ENCODE measurements at regions of chr2 and their contacts with region 1.

Region 1: GRCh38 chr2:7845332-7845731 is 836.5 kb upstream of the ID2 start:
- DNase-seq: no peak
- H3K4me3 Mint-ChIP-seq: no peak overlapping the region
- H3K27ac Mint-ChIP-seq: peak overlapping the region; percentile 81
- H3K4me1 Mint-ChIP-seq: peaks cover 64% of the 10 kb centered on the region
- H3K27me3 Mint-ChIP-seq: no peaks in the 10 kb centered on the region

Region 2: GRCh38 chr2:7450188-7450832 is 395.0 kb before region 1 on chr2:
- intact Hi-C with region 1: loop called (anchors 5 kb)
- DNase-seq: peak; percentile 59
- H3K4me3 Mint-ChIP-seq: peak overlapping the region; percentile 26
- H3K27ac Mint-ChIP-seq: peak overlapping the region; percentile 99
- H3K4me1 Mint-ChIP-seq: peaks cover 85% of the 10 kb centered on the region
- H3K27me3 Mint-ChIP-seq: no peaks in the 10 kb centered on the region

Region 3: DNA sequence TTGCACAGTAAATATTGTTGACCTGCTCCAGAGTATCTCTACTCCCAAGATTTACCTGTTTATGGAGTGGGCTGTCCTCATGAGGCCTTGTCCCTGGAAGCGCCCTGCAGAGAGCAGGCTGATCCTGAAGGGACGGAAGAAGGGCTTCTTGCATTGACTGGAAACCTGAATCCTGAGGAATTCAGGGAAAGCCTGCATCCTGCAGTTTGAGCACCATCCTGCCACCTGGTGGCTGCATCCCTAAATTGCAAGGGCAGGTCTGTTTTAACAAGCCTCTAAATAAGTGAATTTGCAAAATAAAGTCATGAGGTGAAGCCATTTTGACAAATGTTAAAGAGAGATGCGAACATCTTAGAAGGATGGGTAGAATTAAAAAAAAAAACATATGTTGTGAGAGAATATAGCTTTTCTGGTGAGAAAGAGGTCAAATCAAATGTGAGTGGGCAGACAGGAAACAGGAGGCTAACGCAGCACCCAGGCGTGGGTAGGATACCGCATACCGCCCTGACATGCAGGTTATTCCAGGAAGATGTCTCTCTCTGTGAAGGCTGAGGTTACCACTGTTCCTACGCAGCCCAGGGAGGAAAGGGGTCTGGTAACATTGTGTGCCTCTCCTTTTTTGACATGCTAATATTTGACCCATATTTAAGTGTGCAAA is 173.2 kb before region 1 on chr2:
- intact Hi-C with region 1: loop called (anchors 1 kb)
- DNase-seq: peak; percentile 51
- H3K4me3 Mint-ChIP-seq: peak overlapping the region; percentile 63
- H3K27ac Mint-ChIP-seq: peak overlapping the region; percentile 97
- H3K4me1 Mint-ChIP-seq: peaks cover 60% of the 10 kb centered on the region
- H3K27me3 Mint-ChIP-seq: no peaks in the 10 kb centered on the region

Region 4: GRCh38 chr2:7857904-7858303 is 12.6 kb after region 1 on chr2:
- intact Hi-C with region 1: loop called (anchors 1 kb)
- DNase-seq: no peak
- H3K4me3 Mint-ChIP-seq: no peak overlapping the region
- H3K27ac Mint-ChIP-seq: peak overlapping the region; percentile 81
- H3K4me1 Mint-ChIP-seq: peaks cover 34% of the 10 kb centered on the region
- H3K27me3 Mint-ChIP-seq: no peaks in the 10 kb centered on the region

Region 5: DNA sequence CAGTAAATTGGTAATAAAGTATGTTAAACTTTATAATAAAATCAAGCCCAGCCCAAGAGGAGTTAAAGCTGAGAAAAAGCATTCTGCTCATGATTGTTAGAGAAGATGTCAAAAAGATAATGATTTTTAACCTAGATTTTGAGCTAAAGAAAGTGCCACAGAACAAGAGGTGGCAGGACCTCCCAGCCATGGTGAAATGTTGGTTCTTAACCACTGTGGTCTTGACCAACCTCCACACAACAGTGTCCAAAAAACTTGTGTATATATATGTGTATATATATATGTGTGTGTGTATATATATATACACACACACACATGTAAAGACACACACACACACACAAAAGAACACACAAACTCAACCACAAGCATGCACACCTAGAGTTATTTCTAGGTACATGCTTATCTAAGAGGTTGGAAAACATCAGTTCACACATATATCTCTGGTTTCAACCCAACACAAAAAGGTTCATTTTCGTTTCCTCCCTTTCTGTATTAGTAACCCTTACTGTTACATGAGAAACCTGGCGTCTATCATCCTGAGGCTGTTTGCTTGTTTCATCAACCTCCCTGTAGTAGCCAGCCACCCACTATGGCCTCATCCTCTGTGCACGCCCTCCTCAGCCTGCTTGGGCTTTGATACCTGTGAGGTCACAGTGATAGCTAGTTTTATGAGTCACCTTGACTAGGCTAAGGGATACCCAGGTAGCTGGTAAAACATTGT is 204.7 kb after region 1 on chr2:
- intact Hi-C with region 1: loop called (anchors 1 kb)
- DNase-seq: peak; percentile 63
- H3K4me3 Mint-ChIP-seq: peak overlapping the region; percentile 30
- H3K27ac Mint-ChIP-seq: peak overlapping the region; percentile 86
- H3K4me1 Mint-ChIP-seq: peaks cover 53% of the 10 kb centered on the region
- H3K27me3 Mint-ChIP-seq: no peaks in the 10 kb centered on the region

Region 6: GRCh38 chr2:8514796-8515758 is 669.7 kb after region 1 on chr2:
- intact Hi-C with region 1: loop called (anchors 2 kb)
- DNase-seq: peak; percentile 58
- H3K4me3 Mint-ChIP-seq: peak overlapping the region; percentile 45
- H3K27ac Mint-ChIP-seq: peak overlapping the region; percentile 97
- H3K4me1 Mint-ChIP-seq: peaks cover 60% of the 10 kb centered on the region
- H3K27me3 Mint-ChIP-seq: no peaks in the 10 kb centered on the region

Measured in activated T-helper 2 cell treated with anti-CD3 and anti-CD28 coated beads, Interferon-gamma antibody, Interleukin-2, Interleukin-4, amounts not matched to agents 10 μg/mL and 5 μg/mL and 100 μg/mL, durations not matched to agents 14 hours and 24 hours and 36 hours (primary cell).